ENCODE measurements at regions of chr2 and their contacts with region 1.

Region 1: GRCh38 chr2:95022309-95023221 is 2.9 kb upstream of the MAL start:
- DNase-seq: peak; percentile 83
- H3K4me3 Mint-ChIP-seq: no peak overlapping the region
- H3K27ac Mint-ChIP-seq: no peak overlapping the region
- H3K4me1 Mint-ChIP-seq: peaks cover 31% of the 10 kb centered on the region
- H3K27me3 Mint-ChIP-seq: peaks cover 70% of the 10 kb centered on the region
- CTCF ChIP-seq: peak; percentile 98

Region 2: DNA sequence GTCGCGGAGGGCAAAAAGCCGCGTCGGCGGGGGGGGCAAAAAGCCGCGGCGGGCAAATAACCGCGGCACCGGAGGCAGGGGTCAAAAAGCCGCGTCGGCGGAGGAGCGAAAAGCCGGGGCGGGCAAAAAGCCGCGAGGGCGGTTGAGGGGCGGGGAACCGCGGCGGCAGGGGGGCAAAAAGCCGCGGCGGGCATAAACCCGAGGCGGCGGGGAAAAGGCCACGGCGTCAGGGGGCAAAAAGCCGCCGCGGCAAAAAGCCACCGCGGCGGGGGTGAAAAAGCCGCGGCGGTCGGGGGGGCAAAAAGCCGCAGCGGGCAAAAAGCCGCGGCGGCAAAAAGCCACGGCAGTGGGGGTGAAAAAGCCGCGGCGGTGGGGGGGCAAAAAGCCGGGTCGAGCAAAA is 749.3 kb before region 1 on chr2:
- CTCF ChIA-PET with region 1: no interaction called
- intact Hi-C with region 1: no loop called
- DNase-seq: no peak
- H3K4me3 Mint-ChIP-seq: no peak overlapping the region
- H3K27ac Mint-ChIP-seq: no peak overlapping the region
- H3K4me1 Mint-ChIP-seq: no peaks in the 10 kb centered on the region
- H3K27me3 Mint-ChIP-seq: no peaks in the 10 kb centered on the region
- CTCF ChIP-seq: no peak

Region 3: DNA sequence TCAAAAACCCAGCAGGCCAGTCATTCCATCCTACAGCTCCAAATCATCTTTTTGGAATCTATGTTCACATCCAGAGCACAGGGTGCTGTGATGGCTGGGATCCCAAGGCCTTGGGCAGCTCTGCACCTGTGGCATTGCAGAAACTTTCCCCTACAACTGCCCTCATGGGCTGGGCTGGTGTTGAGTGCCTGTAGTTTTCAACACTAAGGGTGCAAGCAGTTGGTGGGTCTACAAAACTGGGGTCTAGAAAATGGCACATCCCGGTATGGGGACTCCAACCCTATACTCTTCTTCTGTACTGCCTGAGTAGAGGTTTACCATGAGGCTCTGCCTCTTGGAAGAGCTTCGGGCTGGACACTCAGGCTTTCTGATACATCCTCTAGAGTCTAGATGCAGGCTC is 246.5 kb before region 1 on chr2:
- CTCF ChIA-PET with region 1: no interaction called
- intact Hi-C with region 1: no loop called
- DNase-seq: no peak
- H3K4me3 Mint-ChIP-seq: no peak overlapping the region
- H3K27ac Mint-ChIP-seq: no peak overlapping the region
- H3K4me1 Mint-ChIP-seq: no peaks in the 10 kb centered on the region
- H3K27me3 Mint-ChIP-seq: peaks cover 82% of the 10 kb centered on the region
- CTCF ChIP-seq: no peak

Region 4: DNA sequence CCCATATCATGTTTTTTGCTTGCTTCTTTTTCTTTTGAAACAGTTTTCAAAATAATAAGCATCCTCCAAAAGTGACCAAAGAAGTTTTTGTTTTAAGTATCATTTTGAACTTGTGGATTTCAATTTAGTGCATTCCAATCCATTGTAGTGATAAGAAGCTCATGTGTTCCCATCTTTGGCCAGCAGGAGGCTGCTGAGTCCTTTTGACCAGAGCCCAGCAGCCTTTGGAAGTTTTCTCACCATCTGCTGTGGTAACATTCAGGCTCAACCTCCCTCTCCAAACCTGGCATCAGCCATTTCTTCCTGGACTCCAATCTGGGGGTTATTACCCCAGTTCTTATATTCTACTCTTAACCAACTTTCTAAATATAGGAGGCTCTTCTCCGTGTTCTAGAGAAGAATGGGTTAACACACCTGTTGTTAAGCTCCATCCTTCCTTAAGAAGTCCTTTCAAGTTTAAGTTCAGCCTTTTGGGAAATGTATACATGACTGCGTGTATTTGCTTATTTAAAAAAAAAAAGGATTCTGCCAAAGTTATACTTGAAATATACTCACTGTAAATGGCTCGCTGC is 36.1 kb before region 1 on chr2:
- CTCF ChIA-PET with region 1: interaction called, 6 read pairs
- intact Hi-C with region 1: loop called (anchors 5 kb)
- DNase-seq: peak; percentile 64
- H3K4me3 Mint-ChIP-seq: no peak overlapping the region
- H3K27ac Mint-ChIP-seq: no peak overlapping the region
- H3K4me1 Mint-ChIP-seq: no peaks in the 10 kb centered on the region
- H3K27me3 Mint-ChIP-seq: peaks cover 74% of the 10 kb centered on the region
- CTCF ChIP-seq: peak; percentile 56

Region 5: GRCh38 chr2:95056461-95057459 is 34.2 kb after region 1 on chr2:
- CTCF ChIA-PET with region 1: interaction called, 9 read pairs
- intact Hi-C with region 1: loop called (anchors 5 kb)
- DNase-seq: no peak
- H3K4me3 Mint-ChIP-seq: no peak overlapping the region
- H3K27ac Mint-ChIP-seq: no peak overlapping the region
- H3K4me1 Mint-ChIP-seq: peaks cover 15% of the 10 kb centered on the region
- H3K27me3 Mint-ChIP-seq: peaks cover 55% of the 10 kb centered on the region
- CTCF ChIP-seq: no peak

Region 6: DNA sequence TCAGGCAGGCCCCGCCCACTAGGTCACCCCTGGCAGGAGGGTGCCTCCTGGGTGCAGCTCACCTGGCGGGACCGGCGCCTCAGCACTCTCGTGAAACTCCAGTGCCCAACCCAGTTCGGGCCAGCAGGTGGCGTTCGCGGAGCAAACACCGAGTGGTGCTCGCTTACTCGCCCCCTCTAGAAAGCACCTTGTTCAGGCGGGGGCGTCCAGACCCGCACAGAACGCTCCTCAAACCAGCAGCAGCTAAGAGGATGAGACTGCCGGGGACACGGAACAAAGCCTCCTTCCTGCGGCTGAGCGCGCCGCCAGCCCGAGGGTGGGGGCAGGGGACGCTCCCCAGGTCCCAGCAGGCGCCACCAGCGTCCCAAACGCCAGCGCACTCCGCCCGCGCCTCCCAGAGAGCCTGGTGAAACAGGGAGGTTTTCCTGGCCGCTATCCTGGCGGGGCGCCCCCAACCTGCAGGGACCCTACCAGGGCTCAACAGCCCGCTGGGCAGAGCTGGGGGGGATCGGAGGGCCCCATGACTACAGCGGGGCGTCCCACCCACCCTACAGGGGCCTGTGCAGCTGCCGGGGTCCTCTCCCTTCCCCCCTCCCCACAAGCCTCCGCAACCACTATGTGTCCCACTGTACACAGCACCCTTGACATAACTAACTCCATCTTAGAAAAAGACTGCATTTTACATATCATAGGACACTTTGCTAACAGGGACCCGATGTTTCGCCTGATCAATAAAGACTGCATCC is 54.4 kb after region 1 on chr2:
- CTCF ChIA-PET with region 1: interaction called, 34 read pairs
- intact Hi-C with region 1: loop called (anchors 1 kb)
- DNase-seq: peak; percentile 95
- H3K4me3 Mint-ChIP-seq: peak overlapping the region; percentile 69
- H3K27ac Mint-ChIP-seq: no peak overlapping the region
- H3K4me1 Mint-ChIP-seq: peaks cover 10% of the 10 kb centered on the region
- H3K27me3 Mint-ChIP-seq: peaks cover 27% of the 10 kb centered on the region
- CTCF ChIP-seq: peak; percentile 88

Region 7: GRCh38 chr2:95115418-95115817 is 92.9 kb after region 1 on chr2:
- CTCF ChIA-PET with region 1: interaction called, 12 read pairs
- intact Hi-C with region 1: loop called (anchors 2 kb)
- DNase-seq: peak; percentile 71
- H3K4me3 Mint-ChIP-seq: no peak overlapping the region
- H3K27ac Mint-ChIP-seq: no peak overlapping the region
- H3K4me1 Mint-ChIP-seq: peaks cover 17% of the 10 kb centered on the region
- H3K27me3 Mint-ChIP-seq: no peaks in the 10 kb centered on the region
- CTCF ChIP-seq: peak; percentile 65

Region 8: DNA sequence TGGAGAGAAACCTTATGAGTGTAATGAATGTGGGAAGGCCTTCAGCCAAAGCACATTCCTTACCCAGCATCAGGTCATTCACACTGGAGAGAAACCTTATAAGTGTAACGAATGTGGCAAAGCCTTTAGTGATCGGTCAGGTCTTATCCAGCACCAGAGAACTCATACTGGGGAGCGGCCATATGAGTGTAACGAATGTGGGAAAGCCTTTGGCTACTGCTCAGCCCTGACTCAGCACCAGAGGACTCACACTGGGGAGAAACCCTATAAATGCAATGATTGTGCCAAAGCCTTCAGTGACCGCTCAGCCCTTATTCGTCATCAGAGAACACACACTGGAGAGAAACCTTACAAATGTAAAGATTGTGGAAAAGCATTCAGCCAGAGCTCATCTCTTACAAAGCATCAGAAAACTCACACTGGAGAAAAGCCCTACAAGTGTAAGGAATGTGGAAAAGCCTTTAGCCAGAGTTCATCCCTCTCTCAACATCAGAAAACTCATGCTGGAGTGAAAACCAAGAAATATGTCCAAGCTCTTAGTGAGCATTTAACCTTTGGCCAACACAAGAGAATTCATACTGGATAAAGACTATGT is 192.6 kb after region 1 on chr2:
- CTCF ChIA-PET with region 1: no interaction called
- intact Hi-C with region 1: no loop called
- DNase-seq: no peak
- H3K4me3 Mint-ChIP-seq: no peak overlapping the region
- H3K27ac Mint-ChIP-seq: no peak overlapping the region
- H3K4me1 Mint-ChIP-seq: no peaks in the 10 kb centered on the region
- H3K27me3 Mint-ChIP-seq: no peaks in the 10 kb centered on the region
- CTCF ChIP-seq: no peak

Region 9: DNA sequence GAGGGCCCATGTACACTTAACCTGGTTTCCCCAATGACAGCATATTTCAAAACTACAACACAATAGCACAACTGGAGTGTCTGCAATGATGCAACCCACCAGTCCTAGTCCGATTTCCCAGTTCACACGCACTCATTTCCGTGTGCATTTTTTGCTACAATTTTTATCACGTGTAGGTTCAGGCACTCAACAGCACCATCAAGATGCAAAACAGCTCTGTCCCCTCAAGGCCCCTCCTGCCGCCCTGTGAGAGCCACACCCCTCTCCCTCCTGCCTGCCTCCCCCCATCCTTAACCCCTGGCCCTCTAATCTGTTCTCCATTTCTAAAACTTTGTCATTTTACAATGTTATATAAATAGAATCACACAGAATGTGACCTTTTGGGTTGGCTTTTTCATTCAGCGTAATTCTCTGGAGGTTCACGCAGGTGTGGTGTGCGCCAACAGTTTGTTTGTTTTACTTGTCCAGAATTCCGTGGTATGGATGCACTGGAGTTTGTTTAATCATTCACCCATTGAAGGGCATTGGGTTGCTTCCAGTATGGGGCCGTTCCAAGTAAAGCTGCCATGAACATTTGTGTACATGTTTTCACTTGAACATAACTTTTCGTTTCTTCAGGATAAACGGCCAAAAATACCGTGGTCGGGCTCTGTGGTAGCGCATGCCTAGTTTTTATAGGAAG is 283.0 kb after region 1 on chr2:
- CTCF ChIA-PET with region 1: no interaction called
- intact Hi-C with region 1: no loop called
- DNase-seq: peak; percentile 18
- H3K4me3 Mint-ChIP-seq: no peak overlapping the region
- H3K27ac Mint-ChIP-seq: no peak overlapping the region
- H3K4me1 Mint-ChIP-seq: peaks cover 14% of the 10 kb centered on the region
- H3K27me3 Mint-ChIP-seq: peaks cover 23% of the 10 kb centered on the region
- CTCF ChIP-seq: no peak